Dorsolateral prefrontal cortex (tissue), 120 donors: ENCODE measurements at regions of chr4 and their contacts with region 1.

Region 1: DNA sequence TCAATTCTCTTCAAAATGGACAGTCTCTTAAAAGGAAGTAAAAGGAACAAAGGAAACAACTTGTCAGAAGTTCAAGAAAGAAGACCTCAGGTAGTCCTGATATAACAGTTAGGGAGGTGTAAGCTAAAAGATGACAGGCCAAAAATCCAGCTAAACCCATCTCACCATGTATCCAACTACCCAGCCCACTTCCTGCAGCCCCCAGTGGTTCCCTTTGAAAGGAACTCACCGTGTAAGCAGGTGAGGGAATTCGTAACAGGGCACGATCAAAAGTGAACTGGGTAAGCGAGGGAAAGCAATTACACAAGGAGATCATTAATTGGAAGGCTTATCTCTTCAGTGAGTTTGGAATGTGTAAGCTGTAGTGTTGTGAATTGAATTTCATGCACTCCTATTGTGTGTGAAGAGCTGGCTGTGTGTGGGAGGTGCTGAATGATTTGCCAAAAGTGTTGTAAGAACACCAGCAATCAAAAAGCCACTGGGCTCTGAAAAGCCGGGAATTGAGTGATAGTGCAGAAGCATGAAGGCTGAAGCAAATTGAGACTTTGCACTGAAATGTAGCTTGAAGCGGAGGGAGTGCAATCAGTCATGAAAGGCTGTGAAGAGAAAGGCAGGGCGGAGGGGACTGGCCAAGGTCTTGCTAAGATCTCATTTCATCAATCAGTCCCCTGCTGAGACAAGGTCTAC is 914.2 kb upstream of the LCORL start:
- DNase-seq: peak in 5 of 10 donors; percentile 3 to 44 (median 32)
- H3K4me3 ChIP-seq: no peak overlapping the region
- H3K27ac ChIP-seq: no peak overlapping the region
- H3K27me3 ChIP-seq: peaks cover 0 to 2% (median 0%) of the 10 kb centered on the region in 45 donors
- CTCF ChIP-seq: no peak

Region 2: GRCh38 chr4:18689308-18690115 is 246.3 kb before region 1 on chr4:
- intact Hi-C with region 1: loop called in 1 of 2 experiments (anchors 5 kb)
- DNase-seq: peak in 5 of 10 donors; percentile 37 to 70 (median 55)
- H3K4me3 ChIP-seq: peak overlapping the region in 8 of 59 donors; percentile 9 to 48 (median 18)
- H3K27ac ChIP-seq: no peak overlapping the region
- H3K27me3 ChIP-seq: peaks cover 0 to 4% (median 0%) of the 10 kb centered on the region in 45 donors
- CTCF ChIP-seq: peak; percentile 75 to 97 (median 91)

Region 3: DNA sequence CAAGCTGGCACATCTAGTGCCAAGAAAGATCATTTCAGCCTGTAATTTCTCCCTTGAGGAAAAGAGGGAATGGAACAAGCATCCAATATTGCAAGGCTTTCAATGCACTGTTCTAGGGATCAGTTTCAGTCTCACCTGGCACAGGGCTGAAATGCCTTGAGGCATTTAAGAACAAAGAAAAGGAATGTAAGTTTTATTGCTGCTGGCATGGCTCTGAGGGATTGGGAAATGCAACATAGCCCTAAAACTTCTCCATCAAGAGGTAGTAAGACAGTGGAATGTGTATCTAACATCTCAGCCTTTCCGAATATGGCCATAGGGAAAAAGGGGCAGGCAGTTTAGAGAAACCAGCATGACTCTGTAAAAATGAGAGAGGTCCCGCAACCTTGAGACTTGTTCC is 181.6 kb before region 1 on chr4:
- intact Hi-C with region 1: no loop called
- DNase-seq: no peak
- H3K4me3 ChIP-seq: no peak overlapping the region
- H3K27ac ChIP-seq: no peak overlapping the region
- H3K27me3 ChIP-seq: peaks cover 0 to 7% (median 0%) of the 10 kb centered on the region in 45 donors
- CTCF ChIP-seq: no peak

Region 4: GRCh38 chr4:19514276-19515070 is 578.7 kb after region 1 on chr4:
- intact Hi-C with region 1: no loop called
- DNase-seq: no peak
- H3K4me3 ChIP-seq: no peak overlapping the region
- H3K27ac ChIP-seq: no peak overlapping the region
- H3K27me3 ChIP-seq: no peaks in the 10 kb centered on the region
- CTCF ChIP-seq: no peak